ENCODE measurements at regions of chr3 and their contacts with region 1.

Region 1: DNA sequence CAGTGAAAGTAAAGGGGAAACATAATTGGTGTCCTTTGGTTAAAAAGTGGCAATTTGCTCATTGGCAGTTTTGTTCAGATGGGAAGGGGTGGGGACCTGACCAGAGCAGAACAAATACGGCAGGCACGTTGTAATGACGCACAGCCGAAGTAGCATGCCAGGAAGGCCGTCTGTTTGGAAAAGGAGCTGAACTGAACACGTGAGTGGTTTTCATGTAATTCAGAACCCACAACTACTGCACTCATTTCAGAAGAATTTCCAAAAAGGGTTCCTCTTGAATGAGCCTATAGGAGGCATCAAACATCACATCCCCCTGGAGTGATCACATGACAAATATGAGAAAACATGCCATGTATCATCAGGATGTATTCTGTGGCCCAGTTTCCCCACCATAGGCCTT is 42.9 kb upstream of the LMCD1 start:
- DNase-seq: peak; percentile 95
- ATAC-seq: peak; percentile 50
- H3K4me3 ChIP-seq: no peak overlapping the region
- H3K27ac ChIP-seq: peak overlapping the region; percentile 88; the same call in 1 of the 2 replicates
- H3K4me1 ChIP-seq: peaks cover 27% of the 10 kb centered on the region
- H3K27me3 ChIP-seq: no peaks in the 10 kb centered on the region
- CTCF ChIP-seq: no peak
- POLR2A ChIP-seq: no peak
- RAD21 ChIP-seq: no peak

Region 2: GRCh38 chr3:8482960-8483665 is 24.4 kb after region 1 on chr3:
- CTCF ChIA-PET with region 1: no interaction called
- POLR2A ChIA-PET with region 1: no interaction called
- dilution Hi-C with region 1: no loop called
- in situ Hi-C with region 1: no loop called
- intact Hi-C with region 1: loop called (anchors 1 kb)
- DNase-seq: peak; percentile 97
- ATAC-seq: peak; percentile 92
- H3K4me3 ChIP-seq: no peak overlapping the region
- H3K27ac ChIP-seq: peak overlapping the region; percentile 79
- H3K4me1 ChIP-seq: peaks cover 14% of the 10 kb centered on the region
- H3K27me3 ChIP-seq: no peaks in the 10 kb centered on the region
- CTCF ChIP-seq: no peak
- POLR2A ChIP-seq: 0 out of 2 replicates have a peak, but pooled peaks have one; percentile 20
- RAD21 ChIP-seq: peak; percentile 18; the same call in 1 of the 2 replicates

Region 3: DNA sequence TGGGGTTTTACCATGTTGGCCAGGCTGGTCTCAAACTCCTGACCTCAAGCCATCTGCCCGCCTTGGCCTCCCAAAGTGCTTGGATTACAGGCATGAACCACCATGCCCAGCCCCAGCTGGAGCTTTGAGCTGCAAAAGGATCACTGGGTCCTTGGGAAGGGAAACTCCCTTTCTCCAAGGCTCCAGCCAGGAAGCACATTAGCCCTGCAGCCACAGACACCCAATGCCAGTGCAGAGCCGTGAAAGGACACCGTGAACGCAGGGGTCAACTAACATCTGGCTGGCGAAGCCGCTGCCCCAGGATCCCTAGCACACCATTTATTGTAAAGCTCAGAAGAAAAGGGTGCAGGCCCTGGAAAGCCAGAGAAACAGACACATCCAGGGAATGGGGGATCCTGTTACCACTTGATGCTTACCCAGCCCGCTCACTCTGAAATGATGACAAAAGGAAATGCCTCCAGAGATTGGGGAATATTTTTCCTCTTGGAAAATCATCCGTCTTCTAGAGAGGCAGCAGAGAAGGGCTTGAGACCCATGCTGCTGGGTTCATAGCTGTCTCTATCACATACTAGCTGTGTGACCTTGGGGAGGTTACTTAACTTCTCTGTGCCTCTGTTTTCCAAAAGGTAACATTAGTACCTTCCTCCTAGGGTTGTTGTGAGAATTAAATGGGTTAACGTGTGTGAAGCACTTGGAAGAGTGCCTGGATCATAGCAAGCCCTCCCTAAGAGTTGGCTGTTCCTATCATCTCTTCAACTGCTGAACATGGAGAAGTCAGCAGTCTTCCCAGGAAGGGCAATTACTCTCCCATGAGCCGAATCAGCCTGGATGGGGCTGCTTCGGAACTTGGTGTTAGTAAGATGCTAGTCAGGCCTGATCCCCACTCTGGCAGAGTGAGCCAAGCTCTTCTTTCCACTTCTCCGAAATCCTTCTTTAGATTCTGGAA is 83.8 kb after region 1 on chr3:
- CTCF ChIA-PET with region 1: no interaction called
- POLR2A ChIA-PET with region 1: no interaction called
- dilution Hi-C with region 1: no loop called
- in situ Hi-C with region 1: no loop called
- intact Hi-C with region 1: no loop called
- DNase-seq: no peak
- ATAC-seq: no peak
- H3K4me3 ChIP-seq: no peak overlapping the region
- H3K27ac ChIP-seq: no peak overlapping the region
- H3K4me1 ChIP-seq: peaks cover 9% of the 10 kb centered on the region
- H3K27me3 ChIP-seq: no peaks in the 10 kb centered on the region
- CTCF ChIP-seq: no peak
- POLR2A ChIP-seq: no peak
- RAD21 ChIP-seq: no peak

Region 4: DNA sequence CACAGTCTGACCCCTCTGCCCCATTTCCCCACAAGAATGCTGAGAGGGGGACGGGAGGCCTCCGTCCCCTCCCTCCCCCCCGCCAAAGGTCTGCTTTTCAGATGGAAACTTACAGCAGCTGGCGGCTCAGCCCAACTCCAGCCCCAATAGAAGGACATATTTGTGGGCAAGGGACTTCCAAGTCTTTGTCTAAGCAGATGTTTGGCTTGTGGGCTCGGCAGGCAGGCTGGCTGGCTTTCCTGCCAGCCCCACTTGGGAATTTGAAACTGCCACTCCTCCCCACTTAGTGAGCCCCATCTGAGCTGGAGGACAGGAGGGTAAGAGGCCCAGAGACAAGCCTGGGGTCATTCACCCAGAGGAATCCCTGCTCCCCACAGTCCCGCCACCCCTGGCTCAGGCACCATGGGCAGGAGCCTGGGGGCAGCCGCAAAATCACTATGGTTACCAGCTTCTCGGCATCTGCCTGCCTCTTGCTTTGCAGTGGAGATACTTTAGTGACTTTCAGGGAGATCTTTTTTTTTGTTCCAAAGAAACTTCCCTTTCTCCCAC is 96.5 kb after region 1 on chr3:
- CTCF ChIA-PET with region 1: no interaction called
- POLR2A ChIA-PET with region 1: no interaction called
- dilution Hi-C with region 1: no loop called
- in situ Hi-C with region 1: no loop called
- intact Hi-C with region 1: loop called (anchors 2 kb)
- DNase-seq: peak; percentile 87
- ATAC-seq: peak; percentile 73
- H3K4me3 ChIP-seq: no peak overlapping the region
- H3K27ac ChIP-seq: peak overlapping the region; percentile 90
- H3K4me1 ChIP-seq: peaks cover 24% of the 10 kb centered on the region
- H3K27me3 ChIP-seq: no peaks in the 10 kb centered on the region
- CTCF ChIP-seq: no peak
- POLR2A ChIP-seq: no peak
- RAD21 ChIP-seq: no peak